ENCODE measurements at regions of chr13 and their contacts with region 1.

Region 1: GRCh38 chr13:50081679-50082425 is 66.6 kb downstream of the KCNRG start:
- DNase-seq: peak; percentile 86 to 97 (median 90)
- ATAC-seq: peak; percentile 74
- H3K4me3 ChIP-seq: peak overlapping the region; percentile 69
- H3K27ac ChIP-seq: peak overlapping the region; percentile 98
- H3K4me1 ChIP-seq: peaks cover 2 to 5% of the 10 kb centered on the region in 2 experiments; a peak in 2 of 5 replicates
- H3K27me3 ChIP-seq: no peaks in the 10 kb centered on the region
- CTCF ChIP-seq: peak in 2 of 3 experiments; percentile 8 to 23; a peak in 2 of 6 replicates
- EP300 ChIP-seq: no peak; the same call in 1 of the 2 replicates
- POLR2A ChIP-seq: peak; percentile 82
- RAD21 ChIP-seq: no peak

Region 2: GRCh38 chr13:50071379-50071778 is 10.5 kb before region 1 on chr13:
- CTCF ChIA-PET with region 1: no interaction called
- POLR2A ChIA-PET with region 1: interaction called, 15 read pairs
- in situ Hi-C with region 1: no loop called
- intact Hi-C with region 1: no loop called
- DNase-seq: no peak
- ATAC-seq: peak; percentile 41
- H3K4me3 ChIP-seq: no peak overlapping the region
- H3K27ac ChIP-seq: no peak overlapping the region
- H3K4me1 ChIP-seq: no peaks in the 10 kb centered on the region; a peak in 2 of 5 replicates
- H3K27me3 ChIP-seq: no peaks in the 10 kb centered on the region
- CTCF ChIP-seq: no peak
- EP300 ChIP-seq: no peak
- POLR2A ChIP-seq: no peak
- RAD21 ChIP-seq: no peak

Region 3: DNA sequence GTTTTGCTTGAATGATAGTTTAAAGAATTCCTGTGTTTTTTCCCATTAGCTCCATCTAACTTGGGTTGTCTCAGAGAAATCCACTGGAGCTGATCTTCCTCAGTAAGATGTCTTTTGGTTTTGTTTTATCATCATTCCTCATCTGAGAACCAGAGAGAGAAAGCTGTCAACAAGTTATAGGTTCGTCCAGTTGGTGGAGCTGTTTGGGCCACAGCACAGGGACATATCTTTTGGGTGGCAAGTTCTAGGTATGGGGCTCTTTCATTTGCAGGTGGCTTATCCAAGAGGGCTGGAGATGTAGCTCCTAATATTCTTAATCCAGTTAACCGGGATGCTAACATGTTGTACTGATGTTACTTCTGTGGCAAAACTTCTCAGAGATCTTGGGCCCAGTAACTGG is 107.6 kb after region 1 on chr13:
- CTCF ChIA-PET with region 1: no interaction called
- POLR2A ChIA-PET with region 1: interaction called, 3 read pairs
- in situ Hi-C with region 1: no loop called
- intact Hi-C with region 1: loop called (anchors 5 kb)
- DNase-seq: peak in 3 of 4 experiments; percentile 11 to 43 (median 28)
- ATAC-seq: peak; percentile 66
- H3K4me3 ChIP-seq: no peak overlapping the region
- H3K27ac ChIP-seq: no peak overlapping the region
- H3K4me1 ChIP-seq: peaks cover 0 to 23% of the 10 kb centered on the region in 2 experiments; a peak in 3 of 5 replicates
- H3K27me3 ChIP-seq: no peaks in the 10 kb centered on the region
- CTCF ChIP-seq: peak; percentile 20 to 59 (median 51); a peak in 5 of 6 replicates
- EP300 ChIP-seq: no peak
- POLR2A ChIP-seq: no peak
- RAD21 ChIP-seq: peak; percentile 36 to 54

Region 4: DNA sequence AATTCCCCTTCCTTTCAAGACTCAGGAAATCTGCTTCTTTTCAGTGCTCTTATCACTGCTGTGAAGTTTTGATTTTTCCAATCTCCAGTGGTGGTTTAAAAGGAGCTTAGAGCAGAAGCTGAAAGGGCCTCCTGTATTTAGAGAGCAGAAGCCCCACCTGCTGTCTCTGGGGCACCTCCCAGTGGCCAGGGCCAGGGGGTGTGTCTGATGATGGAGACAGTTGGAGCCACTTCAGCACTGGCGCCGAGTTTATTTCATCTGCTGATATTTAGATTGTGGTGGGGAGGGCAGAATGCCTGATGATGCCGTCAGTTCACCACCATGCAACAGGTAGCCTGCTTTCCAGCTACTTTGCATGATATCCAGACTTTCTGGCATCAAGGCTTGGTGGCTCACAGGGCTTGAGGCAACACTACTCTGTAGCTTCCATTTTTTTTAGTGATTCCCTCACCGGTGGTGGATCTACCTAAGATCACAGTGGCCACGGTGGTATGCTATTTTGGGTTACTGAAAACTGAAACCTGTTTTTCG is 305.3 kb after region 1 on chr13:
- CTCF ChIA-PET with region 1: no interaction called
- POLR2A ChIA-PET with region 1: no interaction called
- in situ Hi-C with region 1: no loop called
- intact Hi-C with region 1: loop called (anchors 5 kb)
- DNase-seq: peak; percentile 23 to 65 (median 44)
- ATAC-seq: peak; percentile 97
- H3K4me3 ChIP-seq: no peak overlapping the region
- H3K27ac ChIP-seq: no peak overlapping the region
- H3K4me1 ChIP-seq: peaks cover 0 to 18% of the 10 kb centered on the region in 2 experiments; a peak in 2 of 5 replicates
- H3K27me3 ChIP-seq: no peaks in the 10 kb centered on the region
- CTCF ChIP-seq: peak; percentile 44 to 52 (median 50)
- EP300 ChIP-seq: no peak
- POLR2A ChIP-seq: no peak
- RAD21 ChIP-seq: peak; percentile 61 to 65

Measured in K562 (cell line).